Gastrocnemius medialis (tissue), 4 donors: ENCODE measurements at regions of chr18 and their contacts with region 1.

Region 1: DNA sequence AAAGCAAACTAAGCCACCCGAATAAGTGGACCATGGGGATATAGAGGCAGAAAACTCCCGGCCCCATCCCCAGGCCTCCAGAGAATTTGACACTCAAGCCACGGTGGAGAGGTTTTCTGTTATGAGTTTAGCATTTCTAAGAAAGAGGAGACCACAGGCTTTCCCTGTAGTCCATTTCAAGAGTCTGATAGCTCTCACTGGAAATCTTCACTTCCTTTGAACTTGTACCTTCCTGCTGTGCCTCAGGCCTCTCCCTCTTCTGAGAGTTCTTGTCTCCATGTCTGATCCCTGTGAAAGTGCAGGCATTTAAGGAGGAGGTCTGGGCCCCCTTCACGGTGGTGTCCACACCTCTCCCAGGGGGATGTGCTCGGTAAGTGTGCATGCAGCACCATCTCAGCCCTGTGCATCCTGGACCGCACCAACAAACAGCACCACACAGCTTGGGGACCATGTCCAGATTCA is 113.7 kb downstream of the BCL2 start:
- DNase-seq: no peak
- ATAC-seq: no peak
- H3K4me3 ChIP-seq: no peak overlapping the region
- H3K27ac ChIP-seq: no peak overlapping the region
- H3K4me1 ChIP-seq: peaks cover 9 to 10% of the 10 kb centered on the region in 2 donors
- H3K27me3 ChIP-seq: no peaks in the 10 kb centered on the region
- CTCF ChIP-seq: no peak
- POLR2A ChIP-seq: no peak

Region 2: DNA sequence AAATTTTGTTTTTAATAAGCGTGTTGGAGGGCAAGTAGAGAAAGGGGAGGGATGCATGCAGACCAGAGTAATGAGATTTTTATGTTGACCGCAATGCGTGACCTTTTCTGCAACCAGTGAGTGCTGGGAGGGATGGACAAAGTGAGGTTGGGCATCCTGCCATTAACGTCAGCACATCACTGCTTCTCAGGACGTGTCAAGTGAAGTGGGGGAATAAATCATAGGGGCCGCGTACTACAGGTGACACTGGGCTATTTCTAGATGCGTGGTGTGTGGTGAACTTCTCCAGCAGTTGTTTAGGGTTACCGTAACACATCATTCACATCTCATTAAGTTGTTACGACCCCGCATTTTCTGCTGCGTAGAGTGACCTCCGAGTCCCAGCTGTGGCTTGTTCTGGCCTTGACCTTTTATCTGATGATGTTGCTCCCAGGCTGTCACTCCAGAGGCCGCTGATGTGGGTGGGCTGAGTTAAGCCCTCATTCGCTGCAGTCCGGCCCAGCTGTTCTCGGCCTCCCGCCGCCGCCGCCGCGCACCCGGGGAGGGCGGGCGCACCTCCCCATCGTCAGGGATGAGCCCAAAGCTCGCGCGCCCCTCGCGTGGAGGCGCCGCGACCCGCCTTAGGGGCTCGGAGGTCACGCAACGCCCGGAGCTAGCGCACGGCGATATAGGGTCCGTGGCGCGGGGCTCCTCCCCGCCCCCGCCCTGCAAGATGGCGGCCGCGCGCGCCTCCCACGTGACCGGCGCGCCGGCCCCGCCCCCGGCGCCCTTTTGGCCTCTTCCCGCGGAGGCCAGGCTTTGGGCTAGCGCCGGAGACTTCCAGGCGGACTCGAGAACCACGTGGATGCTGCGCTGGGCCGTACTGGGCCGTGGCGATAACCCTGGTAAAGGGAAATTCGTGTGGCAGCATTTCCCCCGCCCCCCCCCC is 679.5 kb before region 1 on chr18:
- in situ Hi-C with region 1: no loop called
- intact Hi-C with region 1: no loop called
- DNase-seq: peak; percentile 83 to 89
- ATAC-seq: peak; percentile 43 to 48
- H3K4me3 ChIP-seq: peak overlapping the region; percentile 72 to 96 (median 84)
- H3K27ac ChIP-seq: peak overlapping the region; percentile 98 to 100 (median 99)
- H3K4me1 ChIP-seq: peaks cover 46 to 52% of the 10 kb centered on the region in 2 donors
- H3K27me3 ChIP-seq: no peaks in the 10 kb centered on the region
- CTCF ChIP-seq: no peak
- POLR2A ChIP-seq: peak; percentile 82 to 94

Region 3: DNA sequence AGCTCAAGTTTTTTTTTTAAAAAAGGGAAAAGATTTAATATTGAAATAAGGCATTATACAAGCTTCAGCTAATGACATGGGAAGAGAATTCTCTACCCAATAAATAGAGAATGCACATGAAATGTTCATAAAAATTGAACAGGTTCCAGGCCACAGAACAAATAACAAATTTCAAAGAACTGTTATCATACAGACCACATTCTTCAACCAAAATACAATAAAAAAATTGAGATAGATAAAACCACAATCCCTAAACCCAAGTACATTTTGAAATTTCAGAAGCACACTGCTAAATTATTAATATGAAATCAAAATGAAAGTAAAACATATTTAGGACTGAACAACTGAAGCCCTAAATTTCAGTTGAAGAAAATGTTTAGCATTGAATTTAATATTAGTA is 24.1 kb after region 1 on chr18:
- in situ Hi-C with region 1: no loop called
- intact Hi-C with region 1: loop called (anchors 2 kb)
- DNase-seq: no peak
- ATAC-seq: no peak
- H3K4me3 ChIP-seq: peak overlapping the region in 3 of 4 donors; percentile 17 to 33 (median 18)
- H3K27ac ChIP-seq: peak overlapping the region in 2 of 4 donors; percentile 12 to 19
- H3K4me1 ChIP-seq: peaks cover 15 to 26% of the 10 kb centered on the region in 2 donors
- H3K27me3 ChIP-seq: no peaks in the 10 kb centered on the region
- CTCF ChIP-seq: no peak
- POLR2A ChIP-seq: no peak